ENCODE measurements at regions of chr1 and their contacts with region 1.

Region 1: GRCh38 chr1:228393248-228393699 is 13.4 kb downstream of the TRIM11 start:
- DNase-seq: no peak
- H3K4me3 ChIP-seq: no peak overlapping the region
- H3K27ac ChIP-seq: peak overlapping the region; percentile 13 to 65 (median 32)
- H3K4me1 ChIP-seq: peaks cover 7 to 17% (median 9%) of the 10 kb centered on the region in 3 donors
- H3K27me3 ChIP-seq: no peaks in the 10 kb centered on the region
- CTCF ChIP-seq: peak in 5 of 6 experiments; percentile 32 to 61 (median 44)
- POLR2A ChIP-seq: no peak

Region 2: GRCh38 chr1:228120857-228121489 is 272.3 kb before region 1 on chr1:
- intact Hi-C with region 1: loop called (anchors 10 kb)
- DNase-seq: no peak
- H3K4me3 ChIP-seq: no peak overlapping the region
- H3K27ac ChIP-seq: peak overlapping the region in 2 of 4 donors; percentile 6 to 12
- H3K4me1 ChIP-seq: peaks cover 0 to 20% (median 3%) of the 10 kb centered on the region in 3 donors
- H3K27me3 ChIP-seq: no peaks in the 10 kb centered on the region
- CTCF ChIP-seq: peak in 1 of 6 experiments; percentile 25
- POLR2A ChIP-seq: no peak

Region 3: GRCh38 chr1:228734881-228735801 is 341.9 kb after region 1 on chr1 and contains the start of gene RHOU:
- intact Hi-C with region 1: no loop called
- DNase-seq: no peak
- H3K4me3 ChIP-seq: peak within 1 kb of the TSS; percentile 63 to 97 (median 78)
- H3K27ac ChIP-seq: peak within 1 kb of the TSS; percentile 73 to 94 (median 82)
- H3K4me1 ChIP-seq: peaks cover 0 to 46% (median 10%) of the 10 kb centered on the region in 3 donors
- H3K27me3 ChIP-seq: peaks cover 0 to 35% (median 0%) of the 10 kb centered on the region in 4 donors
- CTCF ChIP-seq: peak; percentile 44 to 93 (median 88)
- POLR2A ChIP-seq: peak in 2 of 4 donors; percentile 61 to 67
- total RNA-seq, gene RHOU: 0.27 to 9.2 (median 2.5) TPM

Region 4: GRCh38 chr1:228891272-228892034 is 498.2 kb after region 1 on chr1:
- intact Hi-C with region 1: no loop called
- DNase-seq: no peak
- H3K4me3 ChIP-seq: no peak overlapping the region
- H3K27ac ChIP-seq: no peak overlapping the region
- H3K4me1 ChIP-seq: no peaks in the 10 kb centered on the region
- H3K27me3 ChIP-seq: peaks cover 0 to 2% (median 0%) of the 10 kb centered on the region in 4 donors
- CTCF ChIP-seq: no peak
- POLR2A ChIP-seq: no peak